H1 (cell line): ENCODE measurements at regions of chr9 and their contacts with region 1.

Region 1: GRCh38 chr9:26892251-26893029 is at the start of gene CAAP1:
- DNase-seq: peak; percentile 65 to 91
- H3K4me3 ChIP-seq: peak within 1 kb of the TSS; percentile 88 to 99 (median 92)
- H3K27ac ChIP-seq: peak within 1 kb of the TSS; percentile 96
- H3K4me1 ChIP-seq: peaks cover 0 to 3% (median 2%) of the 10 kb centered on the region in 4 experiments; a peak in 1 of 7 replicates
- H3K27me3 ChIP-seq: no peaks in the 10 kb centered on the region
- CTCF ChIP-seq: peak; percentile 24 to 62 (median 59); a peak in 3 of 4 replicates
- EP300 ChIP-seq: no peak
- POLR2A ChIP-seq: peak; percentile 93 to 94
- RAD21 ChIP-seq: peak; percentile 46 to 53
- total RNA-seq, gene CAAP1: 34.1 and 36.7 TPM in 2 replicates

Region 2: GRCh38 chr9:26904070-26904469 is 11.6 kb after region 1 on chr9:
- CTCF ChIA-PET with region 1: interaction called, 3 read pairs
- POLR2A ChIA-PET with region 1: interaction called, 23 read pairs
- DNase-seq: no peak
- H3K4me3 ChIP-seq: no peak overlapping the region
- H3K27ac ChIP-seq: no peak overlapping the region
- H3K4me1 ChIP-seq: no peaks in the 10 kb centered on the region
- H3K27me3 ChIP-seq: no peaks in the 10 kb centered on the region
- CTCF ChIP-seq: no peak
- EP300 ChIP-seq: no peak
- POLR2A ChIP-seq: no peak
- RAD21 ChIP-seq: no peak

Region 3: DNA sequence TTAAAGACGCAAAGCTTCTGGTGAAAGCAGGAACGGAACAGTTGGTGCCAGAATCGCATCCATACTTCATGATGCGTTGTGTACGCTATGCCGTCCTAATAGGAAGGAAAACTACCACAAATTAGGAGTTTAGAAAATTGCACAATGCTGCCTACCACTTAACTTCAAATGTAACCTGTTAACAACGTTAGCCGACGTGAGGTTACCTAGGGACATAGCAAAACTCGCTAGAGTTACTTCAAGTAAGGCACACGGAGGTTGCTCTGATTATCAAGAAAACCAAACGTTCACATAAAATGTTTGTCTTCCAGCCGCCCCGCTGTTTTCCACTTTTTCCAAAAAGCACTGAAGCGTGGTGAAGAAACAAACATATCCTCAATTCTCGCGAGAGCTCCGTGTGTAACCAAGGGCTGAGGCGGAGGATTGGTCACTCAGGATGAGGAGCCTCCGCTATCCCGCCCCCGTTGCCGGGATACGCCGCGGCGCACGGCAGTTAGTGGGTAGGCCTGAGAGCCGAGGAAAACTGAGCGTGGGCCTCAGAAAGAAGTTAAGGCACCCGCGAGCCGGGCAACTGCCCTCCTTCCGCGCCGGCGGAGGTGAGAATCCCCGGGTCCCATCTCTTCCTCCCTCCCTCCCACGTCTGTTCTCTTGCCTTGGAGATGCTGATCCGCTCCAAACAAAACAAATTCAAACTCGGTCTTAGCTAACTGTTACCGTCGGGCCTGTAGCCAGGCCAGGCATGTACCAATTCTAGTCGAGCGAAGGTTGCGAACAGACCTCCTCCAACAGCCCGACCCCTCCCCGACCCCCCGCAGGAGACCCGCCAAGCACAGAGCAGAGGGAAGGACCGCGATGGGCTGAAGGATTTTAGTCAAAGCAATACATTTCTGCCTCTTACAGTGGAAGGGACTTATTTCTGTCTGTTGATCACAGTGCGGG is 63.8 kb after region 1 on chr9 and contains the start of gene IFT74:
- CTCF ChIA-PET with region 1: no interaction called
- POLR2A ChIA-PET with region 1: interaction called, 13 read pairs
- DNase-seq: peak; percentile 59 to 91
- H3K4me3 ChIP-seq: peak within 1 kb of the TSS; percentile 61 to 89 (median 76)
- H3K27ac ChIP-seq: peak within 1 kb of the TSS; percentile 73
- H3K4me1 ChIP-seq: peaks cover 0 to 6% (median 2%) of the 10 kb centered on the region in 4 experiments; a peak in 4 of 7 replicates
- H3K27me3 ChIP-seq: no peaks in the 10 kb centered on the region
- CTCF ChIP-seq: no peak
- EP300 ChIP-seq: no peak
- POLR2A ChIP-seq: peak in 1 of 2 experiments; percentile 92; a peak in 2 of 3 replicates
- RAD21 ChIP-seq: no peak
- total RNA-seq, gene IFT74: 17.2 and 17.8 TPM in 2 replicates

Region 4: GRCh38 chr9:26975693-26976059 is 83.2 kb after region 1 on chr9:
- CTCF ChIA-PET with region 1: interaction called, 23 read pairs
- POLR2A ChIA-PET with region 1: interaction called, 39 read pairs
- DNase-seq: no peak
- H3K4me3 ChIP-seq: peak overlapping the region; percentile 19 to 54 (median 38); a peak in 6 of 8 replicates
- H3K27ac ChIP-seq: peak overlapping the region; percentile 98
- H3K4me1 ChIP-seq: peaks cover 0 to 19% (median 9%) of the 10 kb centered on the region in 4 experiments; a peak in 5 of 7 replicates
- H3K27me3 ChIP-seq: no peaks in the 10 kb centered on the region
- CTCF ChIP-seq: peak; percentile 32 to 80 (median 65)
- EP300 ChIP-seq: no peak
- POLR2A ChIP-seq: peak; percentile 55 to 90
- RAD21 ChIP-seq: peak; percentile 86